Psoas muscle (tissue), 8 donors: ENCODE measurements at regions of chr9 and their contacts with region 1.

Region 1: DNA sequence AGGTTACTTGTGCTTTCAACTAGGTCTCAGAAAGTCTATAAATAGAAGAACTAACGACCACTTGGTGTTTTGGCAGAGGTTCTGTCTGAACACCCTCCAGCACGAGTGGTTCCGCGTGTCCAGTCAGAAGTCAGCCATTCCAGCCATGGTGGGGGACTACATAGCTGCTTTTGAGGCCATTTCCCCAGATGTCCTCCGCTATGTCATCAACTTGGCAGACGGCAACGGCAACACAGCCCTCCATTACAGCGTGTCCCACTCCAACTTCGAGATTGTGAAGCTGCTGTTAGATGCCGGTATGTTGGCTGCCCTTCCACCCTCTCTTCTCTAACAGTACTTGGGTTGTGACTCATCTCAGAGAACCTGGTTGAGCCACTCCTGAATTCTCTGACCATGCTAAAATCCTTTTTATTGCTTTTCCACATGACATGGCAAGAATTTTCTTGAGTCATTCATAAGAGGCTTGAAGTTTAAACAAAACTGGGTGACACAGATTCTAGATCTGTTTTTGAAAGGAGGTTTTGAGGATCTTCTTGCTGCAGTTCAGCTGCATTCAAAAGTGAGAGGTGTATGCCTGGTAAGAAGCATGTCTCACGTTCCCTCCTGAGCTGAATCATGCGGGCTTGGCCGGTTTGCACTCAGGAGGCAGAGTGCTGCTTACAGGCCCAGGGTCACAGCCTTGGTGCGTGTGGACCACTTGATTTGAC is 103.1 kb upstream of the DMRT1 start:
- DNase-seq: peak; percentile 67 to 82
- ATAC-seq: peak; percentile 80 to 91 (median 88)
- H3K4me3 ChIP-seq: peak overlapping the region; percentile 5
- H3K27ac ChIP-seq: peak overlapping the region; percentile 90
- H3K4me1 ChIP-seq: peaks cover 48% of the 10 kb centered on the region
- H3K27me3 ChIP-seq: no peaks in the 10 kb centered on the region
- CTCF ChIP-seq: no peak

Region 2: DNA sequence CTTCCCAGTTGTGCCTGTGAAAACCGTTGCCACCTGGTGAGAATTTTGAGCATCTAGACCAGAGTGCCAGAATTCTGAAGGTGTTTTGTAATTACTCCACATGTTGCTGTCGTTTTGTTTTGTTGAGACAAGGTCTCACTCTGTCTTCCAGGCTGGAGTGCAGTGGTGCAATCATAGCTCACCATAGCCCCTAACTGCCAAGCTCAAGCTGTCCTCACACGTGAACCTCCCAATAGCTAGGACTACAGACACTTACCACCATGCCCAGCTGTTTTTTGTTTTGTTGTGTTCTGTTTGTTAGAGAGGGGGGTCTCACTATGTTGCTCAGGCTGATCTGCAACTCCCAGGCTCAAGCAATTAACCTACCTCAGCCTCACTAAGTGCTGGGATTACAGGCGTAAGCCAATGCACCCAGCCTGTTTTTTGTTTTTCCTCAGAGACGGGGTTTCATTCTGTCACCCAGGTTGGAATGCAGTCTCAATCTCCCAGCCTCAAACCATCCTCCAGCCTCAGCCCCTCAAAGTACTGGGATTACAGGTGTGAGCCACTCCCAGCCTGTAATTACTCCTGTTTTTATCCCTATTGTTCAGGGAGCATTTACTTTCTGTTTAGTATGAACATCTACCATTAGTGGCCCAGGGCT is 18.0 kb before region 1 on chr9:
- intact Hi-C with region 1: loop called in 1 of 2 experiments (anchors 2 kb)
- DNase-seq: no peak
- ATAC-seq: peak in 3 of 4 donors; percentile 67 to 75 (median 74)
- H3K4me3 ChIP-seq: no peak overlapping the region
- H3K27ac ChIP-seq: peak overlapping the region; percentile 50
- H3K4me1 ChIP-seq: peaks cover 63% of the 10 kb centered on the region
- H3K27me3 ChIP-seq: no peaks in the 10 kb centered on the region
- CTCF ChIP-seq: no peak